ENCODE measurements at regions of chr20 and their contacts with region 1.

Region 1: DNA sequence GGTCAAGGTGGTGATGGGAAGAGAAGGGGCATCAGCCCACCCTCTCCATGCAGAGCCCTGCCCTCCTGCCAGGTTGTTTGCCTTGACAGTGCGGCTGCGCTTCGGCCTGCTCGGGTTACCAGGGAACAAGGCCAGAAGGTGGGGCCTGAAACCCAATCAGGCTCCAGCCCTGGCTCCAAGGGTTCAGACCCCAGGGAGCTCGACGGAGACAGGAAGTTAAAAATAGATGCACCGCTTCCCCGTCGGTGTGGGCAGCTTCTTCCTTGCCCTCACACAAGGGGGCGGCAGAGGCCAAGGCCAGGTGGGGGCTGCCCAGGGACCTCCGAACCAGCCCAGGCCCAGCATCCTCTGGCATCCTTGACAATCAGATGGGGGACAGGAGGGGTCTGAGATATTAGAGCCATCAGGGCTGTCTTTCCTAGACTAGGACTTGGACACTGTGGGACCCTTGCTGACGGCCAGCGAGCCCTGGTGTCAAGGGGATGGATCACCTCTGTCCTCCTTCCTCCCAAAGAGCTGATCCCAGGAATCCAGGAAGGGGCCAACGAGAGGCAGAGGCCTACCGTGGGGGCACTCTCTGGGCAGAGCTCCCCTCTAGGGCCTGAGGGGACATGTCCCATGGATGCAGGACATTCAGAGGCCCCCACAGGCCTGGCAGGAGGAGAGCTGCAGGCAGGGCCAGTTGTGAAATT is 65.2 kb downstream of the RIPOR3 start:
- DNase-seq: peak in 1 of 2 donors; percentile 60
- ATAC-seq: peak; percentile 74
- H3K4me3 ChIP-seq: no peak overlapping the region
- H3K27ac ChIP-seq: no peak overlapping the region
- H3K4me1 ChIP-seq: no peaks in the 10 kb centered on the region
- H3K27me3 ChIP-seq: no peaks in the 10 kb centered on the region

Region 2: GRCh38 chr20:50509935-50510705 is 116.0 kb before region 1 on chr20 and contains the start of gene PTPN1:
- intact Hi-C with region 1: no loop called
- DNase-seq: peak; percentile 99
- ATAC-seq: peak; percentile 99
- H3K4me3 ChIP-seq: peak within 1 kb of the TSS; percentile 71 to 80
- H3K27ac ChIP-seq: peak within 1 kb of the TSS in 1 of 2 donors; percentile 69
- H3K4me1 ChIP-seq: peaks cover 2 to 7% of the 10 kb centered on the region in 2 donors
- H3K27me3 ChIP-seq: no peaks in the 10 kb centered on the region
- total RNA-seq, gene PTPN1: 31.2 to 51.6 TPM

Region 3: GRCh38 chr20:50713657-50714101 is 87.5 kb after region 1 on chr20:
- intact Hi-C with region 1: loop called in 1 of 2 experiments (anchors 5 kb)
- DNase-seq: no peak
- ATAC-seq: peak; percentile 36
- H3K4me3 ChIP-seq: no peak overlapping the region
- H3K27ac ChIP-seq: no peak overlapping the region
- H3K4me1 ChIP-seq: no peaks in the 10 kb centered on the region
- H3K27me3 ChIP-seq: no peaks in the 10 kb centered on the region

Region 4: DNA sequence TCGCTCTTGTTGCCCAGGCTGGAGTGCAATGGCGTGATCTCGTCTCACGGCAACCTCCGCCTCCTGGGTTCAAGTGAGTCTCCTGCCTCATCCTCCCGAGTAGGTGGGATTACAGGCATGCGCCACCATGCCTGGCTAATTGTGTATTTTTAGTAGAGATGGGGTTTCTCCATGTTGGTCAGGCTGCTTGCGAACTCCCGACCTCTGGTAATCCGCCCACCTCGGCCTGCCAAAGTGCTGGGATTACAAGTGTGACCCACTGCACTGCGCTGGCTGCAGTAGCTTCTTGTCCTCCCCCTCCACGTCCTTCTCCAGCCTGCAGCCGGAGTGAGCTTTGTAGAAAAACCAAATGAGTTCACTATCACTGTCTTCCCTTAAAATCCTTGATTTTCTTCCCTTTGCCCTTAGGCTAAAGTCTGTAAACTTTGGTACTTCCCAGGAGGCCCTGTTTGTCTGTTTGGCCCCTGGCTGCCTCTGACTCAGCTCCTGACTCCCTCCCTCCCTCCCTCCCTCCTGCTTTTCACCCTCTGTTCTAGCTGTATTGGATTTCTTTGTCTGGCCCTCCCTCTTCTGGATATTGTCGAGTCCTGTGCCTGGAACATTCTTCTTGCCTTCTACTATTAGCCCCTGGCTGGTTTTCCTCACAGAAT is 118.1 kb after region 1 on chr20:
- intact Hi-C with region 1: loop called in 1 of 2 experiments (anchors 10 kb)
- DNase-seq: peak in 1 of 2 donors; percentile 71
- ATAC-seq: peak; percentile 91
- H3K4me3 ChIP-seq: no peak overlapping the region
- H3K27ac ChIP-seq: peak overlapping the region in 1 of 2 donors; percentile 75
- H3K4me1 ChIP-seq: no peaks in the 10 kb centered on the region
- H3K27me3 ChIP-seq: no peaks in the 10 kb centered on the region

Measured in aorta (tissue), 5 donors.